Pancreas (tissue), 10 donors: ENCODE measurements at regions of chr2 and their contacts with region 1.

Region 1: GRCh38 chr2:78330193-78330592 is 695.3 kb upstream of the REG3G start:
- DNase-seq: no peak
- ATAC-seq: no peak
- H3K4me3 ChIP-seq: no peak overlapping the region
- H3K27ac ChIP-seq: no peak overlapping the region
- H3K4me1 ChIP-seq: no peaks in the 10 kb centered on the region
- H3K27me3 ChIP-seq: no peaks in the 10 kb centered on the region
- CTCF ChIP-seq: no peak

Region 2: DNA sequence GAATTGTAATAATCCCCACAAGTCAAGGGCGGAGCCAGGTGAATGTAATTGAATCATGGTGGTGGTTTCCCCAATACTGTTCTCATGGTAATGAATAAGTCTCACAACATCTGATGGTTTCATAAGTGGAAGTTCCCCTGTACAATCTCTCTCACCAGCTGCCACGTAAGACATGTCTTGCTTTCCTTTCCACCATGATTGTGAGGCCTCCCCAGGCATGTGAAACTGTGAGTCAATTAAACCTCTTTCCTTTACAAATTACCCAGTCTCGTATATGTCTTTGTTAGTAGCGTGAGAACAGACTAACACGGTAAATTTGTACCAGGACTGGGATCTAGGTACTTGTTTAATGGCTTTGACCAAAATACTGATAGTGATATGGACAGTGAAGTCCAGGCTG is 49.0 kb before region 1 on chr2:
- intact Hi-C with region 1: loop called in 1 of 3 experiments (anchors 5 kb)
- DNase-seq: no peak
- ATAC-seq: no peak
- H3K4me3 ChIP-seq: no peak overlapping the region
- H3K27ac ChIP-seq: no peak overlapping the region
- H3K4me1 ChIP-seq: no peaks in the 10 kb centered on the region
- H3K27me3 ChIP-seq: no peaks in the 10 kb centered on the region
- CTCF ChIP-seq: no peak